Testis (tissue), 5 donors: ENCODE measurements at regions of chr18 and their contacts with region 1.

Region 1: GRCh38 chr18:22348521-22349316 is 69.0 kb downstream of the CTAGE1 start:
- DNase-seq: peak; percentile 68
- H3K4me3 ChIP-seq: peak overlapping the region; percentile 56 to 62
- H3K27ac ChIP-seq: peak overlapping the region; percentile 79 to 89
- H3K4me1 ChIP-seq: peaks cover 36% of the 10 kb centered on the region
- H3K27me3 ChIP-seq: no peaks in the 10 kb centered on the region
- CTCF ChIP-seq: no peak
- POLR2A ChIP-seq: no peak

Region 2: GRCh38 chr18:22465859-22466457 is 117.2 kb after region 1 on chr18:
- intact Hi-C with region 1: no loop called
- DNase-seq: no peak
- H3K4me3 ChIP-seq: no peak overlapping the region
- H3K27ac ChIP-seq: no peak overlapping the region
- H3K4me1 ChIP-seq: no peaks in the 10 kb centered on the region
- H3K27me3 ChIP-seq: no peaks in the 10 kb centered on the region
- CTCF ChIP-seq: no peak
- POLR2A ChIP-seq: no peak

Region 3: DNA sequence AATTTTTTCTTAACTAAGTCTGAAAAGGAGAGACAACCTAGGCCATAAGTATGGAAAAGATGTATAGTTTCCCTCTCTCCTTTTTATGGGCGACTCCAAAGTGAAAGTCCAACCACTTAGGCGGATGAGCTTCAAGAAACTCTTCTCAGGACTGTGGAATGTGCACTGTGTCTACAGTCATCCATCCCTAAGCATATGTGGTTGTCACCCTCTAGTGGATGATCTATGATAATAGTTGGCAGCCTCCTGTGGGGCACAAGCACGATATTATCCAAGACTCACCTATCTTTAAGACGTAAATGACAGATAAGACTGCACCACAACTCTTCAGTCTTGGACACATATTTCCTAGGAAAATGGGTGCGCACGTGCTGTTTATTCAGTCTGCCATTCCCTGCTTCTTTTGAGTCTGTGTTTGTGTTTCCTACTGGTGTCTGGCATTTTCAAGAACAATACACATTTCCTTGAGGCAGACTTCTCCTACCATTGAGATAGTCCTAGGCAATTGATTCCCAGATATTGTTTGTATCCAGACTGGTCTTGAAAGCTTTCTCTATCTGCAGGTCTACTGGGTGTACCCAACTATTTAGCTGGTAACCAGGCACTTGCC is 214.5 kb after region 1 on chr18:
- intact Hi-C with region 1: loop called (anchors 10 kb)
- DNase-seq: peak; percentile 64
- H3K4me3 ChIP-seq: no peak overlapping the region
- H3K27ac ChIP-seq: no peak overlapping the region
- H3K4me1 ChIP-seq: peaks cover 4% of the 10 kb centered on the region
- H3K27me3 ChIP-seq: no peaks in the 10 kb centered on the region
- CTCF ChIP-seq: peak; percentile 61 to 85 (median 72)
- POLR2A ChIP-seq: no peak